Activated naive CD8-positive, alpha-beta T cell treated with anti-CD3 and anti-CD28 coated beads, Interleukin-2, amount 10 ng/mL, durations not matched to agents 7 days and 5 days (primary cell): ENCODE measurements at regions of chr2 and their contacts with region 1.

Region 1: GRCh38 chr2:23926750-23927571 is at the start of gene ATAD2B:
- DNase-seq: peak; percentile 98
- ATAC-seq: peak; percentile 84
- H3K4me3 Mint-ChIP-seq: peak within 1 kb of the TSS; percentile 94
- H3K27ac Mint-ChIP-seq: peak within 1 kb of the TSS; percentile 98
- H3K4me1 Mint-ChIP-seq: peaks cover 33% of the 10 kb centered on the region
- H3K27me3 Mint-ChIP-seq: no peaks in the 10 kb centered on the region
- total RNA-seq, gene ATAD2B: 33.2 to 34.6 TPM

Region 2: GRCh38 chr2:23824777-23825212 is 102.2 kb before region 1 on chr2:
- POLR2A ChIA-PET with region 1: interaction called, 19 read pairs
- DNase-seq: no peak
- ATAC-seq: peak; percentile 50
- H3K4me3 Mint-ChIP-seq: no peak overlapping the region
- H3K27ac Mint-ChIP-seq: no peak overlapping the region
- H3K4me1 Mint-ChIP-seq: no peaks in the 10 kb centered on the region
- H3K27me3 Mint-ChIP-seq: no peaks in the 10 kb centered on the region

Region 3: GRCh38 chr2:23947350-23947749 is 20.4 kb after region 1 on chr2:
- POLR2A ChIA-PET with region 1: interaction called, 140 read pairs
- DNase-seq: no peak
- ATAC-seq: no peak
- H3K4me3 Mint-ChIP-seq: no peak overlapping the region
- H3K27ac Mint-ChIP-seq: no peak overlapping the region
- H3K4me1 Mint-ChIP-seq: peaks cover 5% of the 10 kb centered on the region
- H3K27me3 Mint-ChIP-seq: no peaks in the 10 kb centered on the region

Region 4: DNA sequence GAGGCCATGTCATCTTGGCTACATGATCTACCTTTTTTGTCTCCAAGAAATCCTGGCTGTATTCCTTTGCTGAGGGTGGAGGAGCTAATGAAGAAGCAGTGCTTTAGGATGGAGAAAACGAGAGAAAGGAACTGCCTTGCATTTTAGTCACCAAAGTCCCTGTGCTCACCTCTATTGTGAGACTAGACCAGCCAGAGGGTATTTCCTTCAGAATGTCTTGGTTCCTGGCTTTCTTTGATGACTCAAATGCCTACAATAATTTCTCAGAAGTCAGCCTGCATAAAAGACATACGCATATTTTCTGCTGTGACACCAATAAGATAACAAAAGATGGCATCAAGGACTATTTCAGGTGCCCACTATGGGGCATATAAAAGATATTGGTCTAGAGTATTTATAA is 138.4 kb after region 1 on chr2:
- POLR2A ChIA-PET with region 1: no interaction called
- DNase-seq: no peak
- ATAC-seq: no peak
- H3K4me3 Mint-ChIP-seq: no peak overlapping the region
- H3K27ac Mint-ChIP-seq: no peak overlapping the region
- H3K4me1 Mint-ChIP-seq: peaks cover 15% of the 10 kb centered on the region
- H3K27me3 Mint-ChIP-seq: no peaks in the 10 kb centered on the region

Region 5: GRCh38 chr2:24075915-24076848 is 149.2 kb after region 1 on chr2 and contains the start of gene SF3B6:
- POLR2A ChIA-PET with region 1: interaction called, 60 read pairs
- DNase-seq: peak; percentile 99
- ATAC-seq: peak; percentile 86
- H3K4me3 Mint-ChIP-seq: peak within 1 kb of the TSS; percentile 94
- H3K27ac Mint-ChIP-seq: peak within 1 kb of the TSS; percentile 97
- H3K4me1 Mint-ChIP-seq: peaks cover 27% of the 10 kb centered on the region
- H3K27me3 Mint-ChIP-seq: no peaks in the 10 kb centered on the region
- total RNA-seq, gene SF3B6: 66.5 to 71.2 TPM

Region 6: DNA sequence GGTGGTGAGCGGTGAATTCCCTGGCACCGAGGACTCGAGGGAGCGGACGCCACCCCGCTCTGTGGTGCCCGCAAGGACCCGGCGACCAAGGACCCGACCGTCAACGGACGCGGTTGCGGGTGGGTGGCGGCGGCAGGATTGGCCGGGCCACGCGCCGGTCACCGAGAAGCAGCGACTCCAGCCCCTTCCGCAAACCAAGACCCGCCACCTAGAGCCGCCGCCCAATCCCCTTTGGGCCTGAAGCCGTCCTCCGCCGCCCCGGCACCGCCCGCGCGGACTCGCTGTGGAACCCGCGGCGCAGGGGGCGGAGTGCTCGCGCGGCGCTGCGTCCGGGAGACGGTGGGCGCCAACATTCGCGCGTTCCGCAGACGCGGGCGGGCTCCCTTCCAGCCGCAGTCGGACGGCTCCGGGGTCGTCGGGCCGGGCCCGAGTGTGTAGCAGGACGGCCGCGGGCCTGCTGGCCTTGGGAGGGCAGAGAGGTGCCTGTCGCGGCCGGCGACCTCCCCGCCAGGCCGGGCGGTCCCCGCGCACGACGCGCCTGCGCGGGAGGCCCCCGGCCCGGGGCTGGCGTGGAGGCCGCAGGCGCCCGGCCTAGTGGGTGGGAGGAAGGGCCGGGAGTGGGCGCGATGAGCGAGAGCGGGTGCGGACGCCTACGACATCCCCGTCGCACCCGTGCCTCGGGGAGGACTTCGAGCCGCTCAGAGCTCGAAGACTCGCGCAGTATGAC is 196.4 kb after region 1 on chr2 and contains the starts of genes FAM228B and PFN4:
- POLR2A ChIA-PET with region 1: interaction called, 14 read pairs
- DNase-seq: peak; percentile 82
- ATAC-seq: peak; percentile 94
- H3K4me3 Mint-ChIP-seq: peak within 1 kb of the TSS; percentile 84
- H3K27ac Mint-ChIP-seq: peak within 1 kb of the TSS; percentile 76
- H3K4me1 Mint-ChIP-seq: peaks cover 16% of the 10 kb centered on the region
- H3K27me3 Mint-ChIP-seq: peaks cover 2% of the 10 kb centered on the region
- total RNA-seq, gene FAM228B: 13.1 to 14.9 TPM
- total RNA-seq, gene PFN4: not detected

Region 7: DNA sequence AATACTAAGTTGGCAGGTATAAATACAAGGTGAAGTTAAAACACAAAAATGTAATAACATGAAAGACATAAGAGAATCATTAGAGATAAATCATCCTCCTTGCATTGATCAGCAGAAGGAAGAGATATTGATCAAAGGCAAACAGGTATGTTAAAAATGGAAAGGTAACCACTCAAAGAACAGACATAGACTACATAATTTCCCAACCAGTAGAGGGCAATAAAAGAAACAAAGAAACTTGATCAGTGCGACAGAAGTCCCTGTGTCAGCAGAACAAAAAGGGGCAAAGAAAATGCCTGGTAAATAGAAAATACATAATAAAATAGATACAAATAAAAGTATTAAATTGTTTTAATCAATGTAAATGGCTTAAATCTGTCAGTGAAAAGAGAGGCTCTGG is 301.5 kb after region 1 on chr2:
- POLR2A ChIA-PET with region 1: no interaction called
- DNase-seq: no peak
- ATAC-seq: no peak
- H3K4me3 Mint-ChIP-seq: no peak overlapping the region
- H3K27ac Mint-ChIP-seq: no peak overlapping the region
- H3K4me1 Mint-ChIP-seq: no peaks in the 10 kb centered on the region
- H3K27me3 Mint-ChIP-seq: no peaks in the 10 kb centered on the region